GM10248 (cell line): ENCODE measurements at regions of chr19 and their contacts with region 1.

Region 1: DNA sequence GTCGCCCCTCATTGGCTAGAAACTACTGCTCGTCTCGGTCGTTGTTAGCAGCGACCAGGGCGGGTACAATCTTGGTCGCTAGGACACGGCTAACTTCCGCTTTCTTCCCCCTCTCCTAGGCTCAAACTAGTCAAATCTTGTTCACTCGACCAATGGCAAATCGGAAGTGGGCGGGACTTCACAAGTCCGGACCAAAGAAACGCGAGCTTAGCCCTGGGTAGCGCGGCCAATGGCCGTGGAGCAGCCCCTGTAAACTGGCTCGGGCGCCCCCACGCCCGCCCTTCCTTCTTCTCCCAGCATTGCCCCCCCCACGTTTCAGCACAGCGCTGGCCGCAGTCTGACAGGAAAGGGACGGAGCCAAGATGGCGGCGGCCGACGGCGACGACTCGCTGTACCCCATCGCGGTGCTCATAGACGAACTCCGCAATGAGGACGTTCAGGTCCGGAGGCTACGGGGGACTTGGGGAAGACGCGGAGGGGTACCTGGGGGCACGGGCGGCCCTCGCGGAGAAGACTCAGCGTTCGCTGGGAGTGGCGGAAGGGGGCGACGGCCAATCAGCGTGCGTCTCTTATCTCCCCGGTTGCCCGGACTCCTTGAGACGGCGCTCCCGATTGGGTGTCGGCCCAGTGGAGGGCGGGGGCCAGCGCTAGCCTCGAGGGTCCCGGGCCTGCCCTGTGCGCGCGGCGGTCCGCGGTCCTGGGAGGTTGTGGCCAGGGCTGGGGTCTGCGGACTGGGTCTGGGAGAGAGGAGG is at the start of gene PPP2R1A:
- DNase-seq: peak; percentile 95
- CTCF ChIP-seq: no peak

Region 2: DNA sequence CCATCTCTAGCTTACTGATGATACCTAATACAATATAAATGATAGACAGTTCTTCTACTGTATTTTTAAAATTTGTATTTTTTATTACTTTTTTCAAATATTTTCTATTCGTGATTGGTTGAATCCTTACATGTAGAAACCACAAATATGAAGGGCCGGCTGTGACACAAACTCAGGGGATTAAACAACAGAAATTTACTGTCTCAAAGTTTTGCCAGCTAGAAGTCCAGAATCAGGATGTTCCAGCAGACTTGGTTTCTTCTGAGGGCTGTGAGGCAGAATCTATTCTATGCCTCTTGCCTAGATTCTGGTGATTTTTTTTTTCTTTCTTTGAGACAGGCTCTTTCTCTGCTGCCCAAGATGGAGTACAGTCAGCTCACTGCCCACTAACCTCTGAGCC is 452.0 kb before region 1 on chr19:
- CTCF ChIA-PET with region 1: no interaction called
- POLR2A ChIA-PET with region 1: interaction called, 11 read pairs
- DNase-seq: no peak
- CTCF ChIP-seq: no peak